ENCODE measurements at regions of chr5 and their contacts with region 1.

Region 1: DNA sequence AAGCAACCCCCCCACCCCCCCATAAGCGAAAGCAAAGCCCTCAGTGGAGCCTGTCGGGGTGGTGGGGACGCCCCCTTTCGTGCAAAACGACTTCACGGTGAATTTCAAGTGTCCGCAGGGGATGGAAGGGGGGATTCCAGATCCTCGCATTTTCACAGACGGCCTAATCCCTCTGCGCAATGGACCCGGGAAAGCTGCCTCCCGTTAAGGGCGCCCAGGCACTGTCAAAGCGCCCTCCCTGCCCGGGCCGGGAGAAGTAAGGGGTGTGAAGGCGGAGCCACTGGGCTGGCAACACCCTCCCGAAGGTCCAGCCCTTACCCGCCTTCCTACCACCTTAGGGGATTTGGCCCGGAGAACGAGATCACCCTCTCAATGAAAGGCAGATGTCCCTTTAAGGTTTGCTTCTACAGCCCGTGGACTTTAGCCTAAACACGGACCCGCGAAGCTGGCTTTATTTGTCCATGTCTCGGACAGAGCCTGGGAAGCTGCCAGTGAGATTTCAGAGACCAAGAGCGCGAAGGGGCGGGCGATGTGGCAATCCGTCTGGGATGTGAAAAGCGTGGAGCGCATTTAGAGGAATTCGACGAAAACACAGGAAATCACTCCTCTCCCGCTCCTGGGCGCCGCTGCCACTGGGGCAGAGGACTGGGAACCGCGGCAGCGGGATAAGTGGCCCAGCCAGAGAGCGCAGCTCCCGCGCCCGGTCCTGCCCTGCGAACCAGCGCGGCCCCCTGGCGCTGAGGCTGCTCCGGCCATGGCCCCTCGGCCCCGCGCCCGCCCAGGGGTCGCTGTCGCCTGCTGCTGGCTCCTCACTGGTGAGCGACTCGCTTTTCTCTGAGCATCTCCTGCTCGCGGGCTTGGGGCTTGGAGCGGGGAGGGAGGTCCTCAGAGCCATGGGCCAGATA is at the starts of genes ITGA1 and PELO:
- DNase-seq: peak; percentile 89 to 97 (median 95)
- ATAC-seq: peak; percentile 77 to 93 (median 88)
- H3K4me3 ChIP-seq: peak within 1 kb of the TSS; percentile 58 to 67 (median 65)
- H3K27ac ChIP-seq: peak within 1 kb of the TSS; percentile 88 to 95 (median 92)
- H3K4me1 ChIP-seq: peaks cover 0 to 40% (median 13%) of the 10 kb centered on the region in 4 donors
- H3K27me3 ChIP-seq: no peaks in the 10 kb centered on the region
- CTCF ChIP-seq: peak; percentile 33 to 57 (median 42)
- POLR2A ChIP-seq: peak; percentile 93
- total RNA-seq, gene ITGA1: 66.5 to 116 (median 82.1) TPM
- total RNA-seq, gene PELO: 14.6 to 24.6 (median 17.6) TPM

Region 2: GRCh38 chr5:52544738-52545137 is 243.1 kb before region 1 on chr5:
- intact Hi-C with region 1: no loop called
- DNase-seq: no peak
- ATAC-seq: no peak
- H3K4me3 ChIP-seq: no peak overlapping the region
- H3K27ac ChIP-seq: no peak overlapping the region
- H3K4me1 ChIP-seq: no peaks in the 10 kb centered on the region
- H3K27me3 ChIP-seq: no peaks in the 10 kb centered on the region
- CTCF ChIP-seq: no peak
- POLR2A ChIP-seq: no peak

Region 3: GRCh38 chr5:52893105-52893504 is 105.3 kb after region 1 on chr5:
- intact Hi-C with region 1: loop called in 1 of 2 experiments (anchors 10 kb)
- DNase-seq: no peak
- ATAC-seq: peak in 3 of 4 donors; percentile 45 to 77 (median 60)
- H3K4me3 ChIP-seq: no peak overlapping the region
- H3K27ac ChIP-seq: peak overlapping the region; percentile 30 to 52 (median 49)
- H3K4me1 ChIP-seq: peaks cover 0 to 38% (median 10%) of the 10 kb centered on the region in 4 donors
- H3K27me3 ChIP-seq: no peaks in the 10 kb centered on the region
- CTCF ChIP-seq: no peak
- POLR2A ChIP-seq: no peak

Region 4: DNA sequence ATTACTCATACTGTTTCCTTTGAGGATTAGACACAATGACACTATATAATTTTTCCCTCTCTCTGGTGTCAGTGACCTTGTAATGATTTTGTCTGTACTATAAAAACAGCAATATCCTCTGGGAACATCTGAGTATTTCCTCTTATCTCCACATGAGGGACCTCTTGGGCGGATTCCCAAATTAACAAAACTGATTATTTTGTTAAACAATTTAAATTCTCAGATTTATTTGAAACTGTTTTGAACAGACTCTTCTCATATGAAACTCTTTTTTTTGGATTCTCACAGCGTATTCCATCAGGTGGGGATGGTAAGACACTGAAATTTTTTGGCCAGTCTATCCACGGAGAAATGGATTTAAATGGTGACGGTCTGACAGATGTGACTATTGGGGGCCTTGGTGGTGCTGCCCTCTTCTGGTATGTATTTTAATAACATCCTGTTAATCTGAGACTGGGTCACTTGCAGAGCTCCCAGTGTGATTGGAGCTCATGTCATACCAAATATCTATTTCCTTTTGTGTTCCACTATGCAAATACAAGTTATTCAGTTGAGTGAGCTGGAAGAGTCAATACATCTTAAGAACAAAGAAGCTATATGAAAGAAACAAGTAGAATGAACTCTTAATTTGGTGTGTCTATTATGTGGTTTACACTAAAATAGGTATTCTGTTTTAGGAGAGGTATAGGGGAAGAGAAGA is 127.5 kb after region 1 on chr5:
- intact Hi-C with region 1: loop called in 1 of 2 experiments (anchors 10 kb)
- DNase-seq: peak in 2 of 3 donors; percentile 24 to 61
- ATAC-seq: peak; percentile 98 to 99 (median 98)
- H3K4me3 ChIP-seq: peak overlapping the region in 1 of 3 donors; percentile 24
- H3K27ac ChIP-seq: peak overlapping the region in 1 of 3 donors; percentile 0
- H3K4me1 ChIP-seq: peaks cover 0 to 3% (median 0%) of the 10 kb centered on the region in 4 donors
- H3K27me3 ChIP-seq: no peaks in the 10 kb centered on the region
- CTCF ChIP-seq: peak; percentile 72 to 78 (median 76)
- POLR2A ChIP-seq: no peak

Measured in right lobe of liver (tissue), 6 donors.